T-cell (primary cell): ENCODE measurements at regions of chr2 and their contacts with region 1.

Region 1: GRCh38 chr2:203909261-203909967 is 27.1 kb upstream of the ICOS start:
- DNase-seq: peak in 14 of 35 experiments; percentile 9 to 66 (median 22)
- ATAC-seq: peak; percentile 58 to 82 (median 74)
- H3K4me3 ChIP-seq: peak overlapping the region; percentile 0 to 19
- H3K4me3 Mint-ChIP-seq: peak overlapping the region; percentile 11 to 34 (median 21)
- H3K27ac ChIP-seq: no peak overlapping the region
- H3K27ac Mint-ChIP-seq: peak overlapping the region; percentile 11 to 33
- H3K4me1 ChIP-seq: peaks cover 8 to 9% of the 10 kb centered on the region in 2 experiments
- H3K4me1 Mint-ChIP-seq: peaks cover 9 to 17% (median 17%) of the 10 kb centered on the region in 3 donors
- H3K27me3 ChIP-seq: no peaks in the 10 kb centered on the region
- H3K27me3 Mint-ChIP-seq: no peaks in the 10 kb centered on the region

Region 2: GRCh38 chr2:203484266-203485112 is 424.9 kb before region 1 on chr2:
- CTCF ChIA-PET with region 1: interaction called, 10 to 12 read pairs
- POLR2A ChIA-PET with region 1: no interaction called
- DNase-seq: peak; percentile 3 to 80 (median 46)
- ATAC-seq: peak; percentile 82 to 95 (median 94)
- H3K4me3 ChIP-seq: no peak overlapping the region
- H3K4me3 Mint-ChIP-seq: no peak overlapping the region
- H3K27ac ChIP-seq: no peak overlapping the region
- H3K27ac Mint-ChIP-seq: peak overlapping the region in 1 of 2 donors; percentile 40
- H3K4me1 ChIP-seq: peaks cover 3% of the 10 kb centered on the region in 2 experiments
- H3K4me1 Mint-ChIP-seq: peaks cover 6 to 7% (median 7%) of the 10 kb centered on the region in 3 donors
- H3K27me3 ChIP-seq: no peaks in the 10 kb centered on the region
- H3K27me3 Mint-ChIP-seq: no peaks in the 10 kb centered on the region

Region 3: GRCh38 chr2:203814661-203815540 is 94.5 kb before region 1 on chr2:
- CTCF ChIA-PET with region 1: interaction called, 5 to 24 read pairs
- POLR2A ChIA-PET with region 1: no interaction called
- DNase-seq: peak in 33 of 35 experiments; percentile 27 to 82 (median 40)
- ATAC-seq: peak; percentile 76 to 95 (median 83)
- H3K4me3 ChIP-seq: peak overlapping the region in 1 of 2 donors; percentile 29
- H3K4me3 Mint-ChIP-seq: peak overlapping the region in 2 of 3 donors; percentile 61 to 64
- H3K27ac ChIP-seq: no peak overlapping the region
- H3K27ac Mint-ChIP-seq: peak overlapping the region; percentile 68 to 81
- H3K4me1 ChIP-seq: peaks cover 19 to 26% of the 10 kb centered on the region in 2 experiments
- H3K4me1 Mint-ChIP-seq: peaks cover 37 to 50% (median 48%) of the 10 kb centered on the region in 3 donors
- H3K27me3 ChIP-seq: no peaks in the 10 kb centered on the region
- H3K27me3 Mint-ChIP-seq: no peaks in the 10 kb centered on the region

Region 4: GRCh38 chr2:203858176-203858575 is 51.2 kb before region 1 on chr2:
- CTCF ChIA-PET with region 1: interaction called, 5 to 15 read pairs
- POLR2A ChIA-PET with region 1: no interaction called
- DNase-seq: peak in 9 of 35 experiments; percentile 3 to 56 (median 23)
- ATAC-seq: peak in 2 of 4 experiments; percentile 48 to 57
- H3K4me3 ChIP-seq: no peak overlapping the region
- H3K4me3 Mint-ChIP-seq: no peak overlapping the region
- H3K27ac ChIP-seq: peak overlapping the region; percentile 1
- H3K27ac Mint-ChIP-seq: peak overlapping the region in 1 of 2 donors; percentile 66
- H3K4me1 ChIP-seq: peaks cover 3 to 17% of the 10 kb centered on the region in 2 experiments
- H3K4me1 Mint-ChIP-seq: peaks cover 58 to 64% (median 61%) of the 10 kb centered on the region in 3 donors
- H3K27me3 ChIP-seq: no peaks in the 10 kb centered on the region
- H3K27me3 Mint-ChIP-seq: no peaks in the 10 kb centered on the region

Region 5: GRCh38 chr2:203869223-203870042 is 40.0 kb before region 1 on chr2:
- CTCF ChIA-PET with region 1: interaction called, 4 to 15 read pairs
- POLR2A ChIA-PET with region 1: no interaction called
- DNase-seq: peak; percentile 45 to 82 (median 68)
- ATAC-seq: peak; percentile 80 to 88 (median 82)
- H3K4me3 ChIP-seq: peak overlapping the region in 1 of 2 donors; percentile 42
- H3K4me3 Mint-ChIP-seq: peak overlapping the region; percentile 80 to 85 (median 84)
- H3K27ac ChIP-seq: peak overlapping the region; percentile 77
- H3K27ac Mint-ChIP-seq: peak overlapping the region; percentile 95 to 97
- H3K4me1 ChIP-seq: peaks cover 49 to 51% of the 10 kb centered on the region in 2 experiments
- H3K4me1 Mint-ChIP-seq: peaks cover 74 to 84% (median 83%) of the 10 kb centered on the region in 3 donors
- H3K27me3 ChIP-seq: no peaks in the 10 kb centered on the region
- H3K27me3 Mint-ChIP-seq: no peaks in the 10 kb centered on the region

Region 6: DNA sequence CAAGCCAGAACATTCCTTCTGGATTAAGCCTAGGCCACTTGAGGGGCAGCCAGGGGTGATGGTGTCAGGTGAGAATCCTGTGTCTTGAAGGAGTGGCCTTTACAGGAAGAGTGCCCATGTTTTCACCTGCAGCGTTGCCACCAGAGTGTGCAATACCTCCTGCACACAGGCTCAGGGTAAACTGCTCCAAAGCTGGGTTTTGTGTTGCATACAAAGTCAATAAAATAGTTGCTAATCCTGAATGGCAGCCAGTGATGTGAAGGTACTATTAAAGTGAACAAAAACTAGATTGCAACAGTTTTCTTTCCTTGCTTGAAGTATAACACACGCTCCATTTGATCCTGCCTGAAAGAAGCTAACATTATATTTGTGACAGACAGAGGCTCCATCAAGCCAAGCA is 1708.5 kb after region 1 on chr2:
- CTCF ChIA-PET with region 1: no interaction called
- POLR2A ChIA-PET with region 1: no interaction called
- DNase-seq: no peak
- ATAC-seq: no peak
- H3K4me3 ChIP-seq: no peak overlapping the region
- H3K4me3 Mint-ChIP-seq: no peak overlapping the region
- H3K27ac ChIP-seq: no peak overlapping the region
- H3K27ac Mint-ChIP-seq: no peak overlapping the region
- H3K4me1 ChIP-seq: peaks cover 0 to 13% of the 10 kb centered on the region in 2 experiments
- H3K4me1 Mint-ChIP-seq: peaks cover 11 to 13% (median 11%) of the 10 kb centered on the region in 3 donors
- H3K27me3 ChIP-seq: peaks cover 0 to 6% of the 10 kb centered on the region in 2 experiments
- H3K27me3 Mint-ChIP-seq: no peaks in the 10 kb centered on the region